ENCODE measurements at regions of chr1 and their contacts with region 1.

Region 1: GRCh38 chr1:45339789-45340570 is at the starts of genes MUTYH and TOE1:
- DNase-seq: peak; percentile 88 to 90
- H3K4me3 ChIP-seq: peak within 1 kb of the TSS; percentile 88 to 89
- H3K27ac ChIP-seq: peak within 1 kb of the TSS; percentile 96 to 98
- H3K4me1 ChIP-seq: peaks cover 0 to 9% of the 10 kb centered on the region in 2 donors
- H3K27me3 ChIP-seq: no peaks in the 10 kb centered on the region
- CTCF ChIP-seq: peak in 1 of 4 experiments; percentile 10
- POLR2A ChIP-seq: peak; percentile 20 to 74
- total RNA-seq, gene MUTYH: 12.6 to 49.2 (median 26.3) TPM
- total RNA-seq, gene TOE1: 10.3 to 21.8 (median 14.4) TPM

Region 2: DNA sequence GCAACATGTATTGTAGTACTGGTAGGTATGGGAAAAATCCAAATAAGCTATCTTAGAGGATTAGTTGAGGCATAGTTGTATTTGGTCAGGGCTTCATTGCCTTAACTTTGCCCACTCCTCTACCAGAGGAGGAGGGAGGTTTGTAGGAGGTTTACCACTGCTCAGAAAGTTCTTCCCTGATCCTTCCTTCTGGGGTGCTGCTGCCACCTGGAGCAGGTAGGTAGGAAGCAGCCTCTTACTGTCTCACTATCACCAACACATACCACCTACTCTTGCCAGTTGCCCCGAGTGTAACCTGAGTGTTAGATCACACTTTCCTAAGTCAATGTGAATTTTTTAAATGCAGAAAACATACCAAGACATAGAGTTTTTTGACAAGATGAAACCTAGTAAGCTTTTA is 109.4 kb before region 1 on chr1:
- intact Hi-C with region 1: no loop called
- DNase-seq: no peak
- H3K4me3 ChIP-seq: no peak overlapping the region
- H3K27ac ChIP-seq: no peak overlapping the region
- H3K4me1 ChIP-seq: no peaks in the 10 kb centered on the region
- H3K27me3 ChIP-seq: no peaks in the 10 kb centered on the region
- CTCF ChIP-seq: no peak
- POLR2A ChIP-seq: no peak

Region 3: DNA sequence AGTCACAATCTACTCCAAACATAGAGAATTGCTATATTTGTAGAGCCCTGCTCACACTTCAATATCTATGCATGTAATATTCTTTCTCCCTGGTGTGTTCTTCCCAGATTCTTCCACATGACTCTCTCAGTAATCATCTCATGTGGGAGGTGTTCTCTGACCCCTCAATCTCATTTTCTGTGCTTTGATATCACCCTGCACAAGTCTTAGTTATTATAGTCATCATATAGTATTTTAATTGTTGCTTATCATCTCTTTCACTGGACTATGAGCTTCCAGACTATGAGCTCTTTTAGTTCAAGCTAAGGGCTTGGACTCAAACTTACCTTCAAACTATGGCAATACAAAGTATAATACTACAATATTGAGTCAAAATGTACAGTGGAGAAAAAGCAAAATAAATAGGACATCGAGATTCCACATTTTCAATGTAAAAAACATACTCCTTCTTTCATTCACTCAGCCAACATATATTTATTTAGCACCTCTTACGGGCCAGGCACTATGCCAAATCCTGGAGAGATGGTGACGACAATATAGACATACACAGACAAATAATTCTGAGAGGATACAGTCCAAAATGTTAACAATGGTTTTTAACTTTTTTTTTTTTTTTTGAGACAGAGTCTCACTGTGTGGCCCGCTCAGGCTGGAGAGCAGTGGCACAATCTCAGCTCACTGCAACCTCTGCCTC is 138.3 kb after region 1 on chr1:
- intact Hi-C with region 1: no loop called
- DNase-seq: no peak
- H3K4me3 ChIP-seq: no peak overlapping the region
- H3K27ac ChIP-seq: no peak overlapping the region
- H3K4me1 ChIP-seq: no peaks in the 10 kb centered on the region
- H3K27me3 ChIP-seq: no peaks in the 10 kb centered on the region
- CTCF ChIP-seq: no peak
- POLR2A ChIP-seq: no peak

Region 4: DNA sequence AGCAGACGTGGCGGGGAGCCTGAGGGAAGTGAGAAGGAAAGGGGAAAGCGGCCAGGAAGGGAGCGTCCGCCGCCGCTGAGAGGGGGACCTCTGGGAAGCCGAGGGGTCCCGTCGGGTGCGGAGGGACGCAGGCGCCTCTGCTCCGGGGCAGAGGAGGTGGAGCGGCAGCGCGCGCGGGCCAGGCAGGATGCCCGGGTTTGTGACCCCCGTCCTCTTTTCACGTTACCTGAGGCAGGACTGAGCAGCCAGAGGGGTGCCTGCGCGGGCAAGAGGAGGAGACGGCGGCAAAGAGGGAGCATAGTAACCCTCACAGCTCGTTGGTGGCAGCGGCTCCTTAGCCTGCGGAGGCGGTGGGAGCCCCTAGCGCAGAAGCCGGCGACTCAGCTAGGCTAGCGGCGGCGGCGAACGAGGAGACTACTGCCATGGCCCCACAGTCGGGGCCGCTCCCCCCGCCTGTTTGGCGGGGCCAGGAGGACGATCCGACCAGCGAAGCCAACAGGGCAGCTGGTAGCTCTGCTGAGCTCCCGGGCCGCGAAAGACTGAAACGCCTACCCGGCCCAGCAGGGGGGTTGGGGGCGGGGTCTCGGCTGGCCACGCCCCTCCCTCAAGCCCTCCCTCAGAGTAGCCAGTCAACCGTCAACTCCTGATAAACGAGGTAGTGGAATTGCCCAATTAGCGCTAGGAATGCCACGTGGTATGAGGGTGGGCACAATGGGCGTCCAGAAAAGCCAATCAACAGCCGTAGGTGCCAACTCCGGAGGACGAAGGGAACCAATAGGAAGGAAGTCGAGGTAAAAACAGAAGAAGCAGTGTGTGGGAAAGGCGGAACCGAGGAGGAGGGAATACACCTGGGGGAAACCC is 150.9 kb after region 1 on chr1 and contains the start of gene TESK2:
- intact Hi-C with region 1: loop called (anchors 10 kb)
- DNase-seq: peak; percentile 98
- H3K4me3 ChIP-seq: peak within 1 kb of the TSS; percentile 52 to 73
- H3K27ac ChIP-seq: peak within 1 kb of the TSS; percentile 79 to 80
- H3K4me1 ChIP-seq: no peaks in the 10 kb centered on the region
- H3K27me3 ChIP-seq: no peaks in the 10 kb centered on the region
- CTCF ChIP-seq: peak in 2 of 4 experiments; percentile 49 to 59
- POLR2A ChIP-seq: peak; percentile 89 to 96
- total RNA-seq, gene TESK2: 0.29 to 7.5 (median 2.1) TPM